Adrenal gland (tissue), 19 donors: ENCODE measurements at regions of chr10 and their contacts with region 1.

Region 1: DNA sequence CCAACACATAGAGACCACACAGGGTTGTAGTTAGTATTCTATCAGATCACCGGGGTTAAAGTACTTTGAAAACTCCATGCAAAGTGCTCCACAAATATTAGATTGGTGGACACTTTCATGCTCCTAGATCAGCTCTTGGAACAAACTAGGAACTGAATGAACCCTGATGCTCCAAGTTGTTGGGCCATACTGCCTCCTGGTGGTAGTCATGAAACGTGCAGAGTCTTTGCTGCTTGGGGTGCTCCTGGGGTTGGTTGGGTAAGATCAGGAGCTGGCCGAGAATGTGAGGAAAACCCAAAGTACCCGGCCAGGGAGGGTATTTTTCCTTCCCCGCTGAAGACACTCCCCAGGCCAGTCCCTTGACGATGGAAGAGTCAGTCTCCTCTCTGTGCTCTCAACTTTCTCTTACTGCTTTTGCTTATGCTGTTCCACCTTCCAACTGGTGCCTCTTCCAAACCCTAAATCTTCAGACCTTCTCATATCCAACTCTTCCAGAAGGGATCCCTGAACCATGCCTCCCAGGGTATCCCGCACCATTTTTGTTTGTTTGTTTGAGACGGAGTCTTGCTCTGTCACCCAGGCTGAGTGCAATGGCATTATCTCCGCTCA is 920 bp upstream of the RPEL1 start:
- DNase-seq: peak; percentile 76 to 93 (median 78)
- H3K4me3 ChIP-seq: no peak overlapping the region
- H3K27ac ChIP-seq: no peak overlapping the region
- H3K4me1 ChIP-seq: peaks cover 5 to 6% of the 10 kb centered on the region in 2 donors
- H3K27me3 ChIP-seq: no peaks in the 10 kb centered on the region
- CTCF ChIP-seq: peak; percentile 86 to 93 (median 92)
- POLR2A ChIP-seq: no peak

Region 2: GRCh38 chr10:102917962-102918816 is 326.6 kb before region 1 on chr10 and contains the start of gene CNNM2:
- intact Hi-C with region 1: loop called (anchors 5 to 10 kb)
- DNase-seq: peak; percentile 100
- H3K4me3 ChIP-seq: peak within 1 kb of the TSS; percentile 44 to 88 (median 77)
- H3K27ac ChIP-seq: peak within 1 kb of the TSS; percentile 54 to 93 (median 89)
- H3K4me1 ChIP-seq: peaks cover 22 to 51% of the 10 kb centered on the region in 2 donors
- H3K27me3 ChIP-seq: no peaks in the 10 kb centered on the region
- CTCF ChIP-seq: peak in 1 of 6 experiments; percentile 1
- POLR2A ChIP-seq: peak; percentile 61 to 79
- total RNA-seq, gene CNNM2: 15.9 to 52.0 (median 40.7) TPM

Region 3: DNA sequence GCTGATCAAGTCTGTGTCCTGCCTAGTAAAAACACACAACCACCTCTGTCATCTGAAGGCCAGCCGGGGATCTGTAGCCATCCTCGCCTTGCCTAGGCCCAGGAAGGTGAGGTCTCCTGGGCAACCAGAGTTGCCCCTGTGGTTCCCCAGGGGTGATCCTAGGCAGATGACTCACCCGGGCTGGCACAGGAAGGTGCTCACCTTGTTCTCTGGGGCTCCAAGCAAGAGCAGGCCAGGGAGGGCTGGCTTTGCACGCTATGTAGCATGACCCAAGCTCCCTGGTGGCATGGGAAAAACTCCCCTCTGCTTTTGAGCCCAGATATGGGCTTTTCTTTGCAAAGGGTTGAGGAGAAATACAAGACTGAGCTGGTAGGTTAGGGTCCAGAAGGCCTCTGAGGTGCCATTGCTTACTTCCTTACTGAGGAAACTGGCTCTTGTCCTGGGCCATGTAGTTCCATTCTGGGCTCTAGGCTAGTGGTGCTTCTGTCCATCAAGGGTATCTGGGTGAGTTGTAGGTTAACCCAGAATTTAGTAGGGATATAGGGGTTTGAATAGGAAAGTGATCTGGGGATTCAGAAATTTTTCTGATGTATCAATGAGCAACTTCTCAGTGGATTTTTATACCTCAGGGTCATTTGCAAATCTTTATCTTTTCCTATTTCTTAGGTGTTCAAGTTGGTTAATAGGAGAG is 163.7 kb before region 1 on chr10:
- intact Hi-C with region 1: loop called (anchors 10 kb)
- DNase-seq: no peak
- H3K4me3 ChIP-seq: no peak overlapping the region
- H3K27ac ChIP-seq: no peak overlapping the region
- H3K4me1 ChIP-seq: no peaks in the 10 kb centered on the region
- H3K27me3 ChIP-seq: no peaks in the 10 kb centered on the region
- CTCF ChIP-seq: no peak
- POLR2A ChIP-seq: no peak

Region 4: GRCh38 chr10:103192451-103193106 is 52.2 kb before region 1 on chr10:
- intact Hi-C with region 1: loop called in 1 of 2 experiments (anchors 5 kb)
- DNase-seq: peak; percentile 77 to 91 (median 87)
- H3K4me3 ChIP-seq: peak overlapping the region; percentile 29 to 98 (median 77)
- H3K27ac ChIP-seq: peak overlapping the region; percentile 75 to 99 (median 96)
- H3K4me1 ChIP-seq: peaks cover 33 to 66% of the 10 kb centered on the region in 2 donors
- H3K27me3 ChIP-seq: no peaks in the 10 kb centered on the region
- CTCF ChIP-seq: peak in 1 of 6 experiments; percentile 1
- POLR2A ChIP-seq: peak; percentile 49 to 64

Region 5: DNA sequence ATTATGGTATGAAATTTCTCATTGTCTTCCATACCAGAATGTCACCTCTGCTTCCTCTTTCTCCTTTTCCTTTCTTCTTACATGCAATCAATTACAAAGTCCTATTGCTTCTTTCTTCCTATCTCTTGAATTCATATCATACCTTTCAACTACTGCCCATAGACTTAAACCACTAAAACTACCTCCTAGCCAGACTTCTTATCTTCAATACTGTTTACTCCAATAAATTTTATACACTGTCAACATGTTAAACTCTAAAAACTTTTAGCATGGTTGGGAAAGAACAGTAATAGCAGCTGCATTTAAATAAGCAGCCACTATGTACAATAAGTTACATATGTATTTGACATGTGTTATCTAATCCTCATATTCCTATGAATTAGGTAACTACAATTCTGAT is 71.3 kb after region 1 on chr10:
- intact Hi-C with region 1: no loop called
- DNase-seq: no peak
- H3K4me3 ChIP-seq: no peak overlapping the region
- H3K27ac ChIP-seq: no peak overlapping the region
- H3K4me1 ChIP-seq: no peaks in the 10 kb centered on the region
- H3K27me3 ChIP-seq: no peaks in the 10 kb centered on the region
- CTCF ChIP-seq: no peak
- POLR2A ChIP-seq: no peak